IMR-90 (cell line): ENCODE measurements at regions of chr4 and their contacts with region 1.

Region 1: GRCh38 chr4:4823621-4824162 is 35.8 kb upstream of the MSX1 start:
- DNase-seq: no peak
- ATAC-seq: no peak
- H3K4me3 ChIP-seq: no peak overlapping the region
- H3K27ac ChIP-seq: no peak overlapping the region
- H3K4me1 ChIP-seq: no peaks in the 10 kb centered on the region
- H3K27me3 ChIP-seq: peaks cover 30% of the 10 kb centered on the region
- CTCF ChIP-seq: no peak
- POLR2A ChIP-seq: no peak
- RAD21 ChIP-seq: no peak

Region 2: DNA sequence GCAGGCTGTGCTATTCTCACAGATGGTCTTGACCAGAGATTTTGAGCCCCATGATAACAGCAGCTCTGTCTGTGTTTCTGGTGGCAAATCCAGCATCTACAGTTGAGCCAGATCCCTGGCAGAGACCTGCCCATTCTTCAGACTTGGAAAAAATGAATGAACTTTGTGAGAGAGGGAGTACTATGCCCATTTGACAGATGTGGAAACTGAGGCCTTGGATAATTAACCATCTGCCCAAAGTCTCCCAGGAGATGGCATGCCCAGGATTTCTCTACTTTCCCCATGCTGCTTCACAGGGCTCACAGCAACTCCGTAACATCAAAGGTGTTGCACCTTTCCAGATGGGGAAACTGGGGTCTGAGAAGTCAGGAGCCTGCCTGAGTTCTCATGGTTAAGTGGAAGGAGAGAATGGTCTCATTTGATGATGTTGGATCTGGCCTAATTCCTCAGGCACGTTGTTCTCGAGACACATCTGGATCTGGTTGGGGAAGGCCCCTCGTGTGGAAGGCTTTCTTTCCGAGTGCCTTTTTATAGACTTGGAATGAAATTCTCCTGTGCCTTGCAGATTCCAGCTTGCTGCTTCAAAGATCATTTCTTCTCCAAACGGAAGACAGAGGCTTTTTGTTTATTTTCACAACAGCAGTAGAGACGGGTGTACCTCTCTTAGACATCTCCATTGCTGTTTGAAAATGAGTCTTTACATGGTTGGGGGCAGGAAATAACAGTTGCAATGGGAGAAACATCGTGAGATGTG is 208.6 kb before region 1 on chr4:
- CTCF ChIA-PET with region 1: no interaction called
- POLR2A ChIA-PET with region 1: no interaction called
- dilution Hi-C with region 1: no loop called
- in situ Hi-C with region 1: no loop called
- intact Hi-C with region 1: no loop called
- DNase-seq: peak; percentile 66
- ATAC-seq: peak; percentile 51
- H3K4me3 ChIP-seq: no peak overlapping the region
- H3K27ac ChIP-seq: no peak overlapping the region
- H3K4me1 ChIP-seq: peaks cover 10% of the 10 kb centered on the region; the same call in 1 of the 2 replicates
- H3K27me3 ChIP-seq: no peaks in the 10 kb centered on the region
- CTCF ChIP-seq: no peak
- POLR2A ChIP-seq: no peak
- RAD21 ChIP-seq: no peak

Region 3: GRCh38 chr4:4791299-4792111 is 32.2 kb before region 1 on chr4:
- CTCF ChIA-PET with region 1: no interaction called
- POLR2A ChIA-PET with region 1: no interaction called
- dilution Hi-C with region 1: no loop called
- in situ Hi-C with region 1: no loop called
- intact Hi-C with region 1: loop called (anchors 1 kb)
- DNase-seq: peak; percentile 8
- ATAC-seq: peak; percentile 24
- H3K4me3 ChIP-seq: no peak overlapping the region
- H3K27ac ChIP-seq: no peak overlapping the region
- H3K4me1 ChIP-seq: no peaks in the 10 kb centered on the region
- H3K27me3 ChIP-seq: no peaks in the 10 kb centered on the region; the same call in 1 of the 2 replicates
- CTCF ChIP-seq: no peak
- POLR2A ChIP-seq: no peak
- RAD21 ChIP-seq: no peak

Region 4: GRCh38 chr4:5045097-5045496 is 221.4 kb after region 1 on chr4:
- CTCF ChIA-PET with region 1: no interaction called
- POLR2A ChIA-PET with region 1: no interaction called
- dilution Hi-C with region 1: no loop called
- in situ Hi-C with region 1: no loop called
- intact Hi-C with region 1: no loop called
- DNase-seq: no peak
- ATAC-seq: peak; percentile 40
- H3K4me3 ChIP-seq: no peak overlapping the region
- H3K27ac ChIP-seq: no peak overlapping the region
- H3K4me1 ChIP-seq: peaks cover 2% of the 10 kb centered on the region; the same call in 1 of the 2 replicates
- H3K27me3 ChIP-seq: no peaks in the 10 kb centered on the region; the same call in none of the 2 replicates
- CTCF ChIP-seq: no peak
- POLR2A ChIP-seq: no peak
- RAD21 ChIP-seq: no peak

Region 5: DNA sequence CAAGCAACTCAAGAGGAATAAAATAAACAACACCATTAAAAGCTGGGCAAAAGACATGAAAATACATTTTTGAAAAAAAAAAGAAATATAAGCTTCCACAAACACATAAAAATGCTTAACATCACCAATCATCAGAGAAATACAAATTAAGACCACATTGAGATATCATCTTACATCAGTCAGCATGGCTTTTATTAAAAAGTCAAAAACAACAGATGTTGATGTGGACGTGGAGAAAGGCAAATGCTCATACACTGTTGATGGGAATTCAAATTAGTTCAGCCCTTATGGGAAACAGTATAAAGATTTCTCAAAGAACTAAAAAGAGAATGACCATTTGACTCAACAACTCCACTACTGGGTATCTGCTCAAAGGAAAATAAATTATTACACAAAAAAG is 287.2 kb after region 1 on chr4:
- CTCF ChIA-PET with region 1: no interaction called
- POLR2A ChIA-PET with region 1: no interaction called
- dilution Hi-C with region 1: no loop called
- in situ Hi-C with region 1: no loop called
- intact Hi-C with region 1: no loop called
- DNase-seq: no peak
- ATAC-seq: no peak
- H3K4me3 ChIP-seq: no peak overlapping the region
- H3K27ac ChIP-seq: no peak overlapping the region
- H3K4me1 ChIP-seq: peaks cover 9% of the 10 kb centered on the region
- H3K27me3 ChIP-seq: no peaks in the 10 kb centered on the region
- CTCF ChIP-seq: no peak
- POLR2A ChIP-seq: no peak
- RAD21 ChIP-seq: no peak